HepG2 (cell line): ENCODE measurements at regions of chr17 and their contacts with region 1.

Region 1: DNA sequence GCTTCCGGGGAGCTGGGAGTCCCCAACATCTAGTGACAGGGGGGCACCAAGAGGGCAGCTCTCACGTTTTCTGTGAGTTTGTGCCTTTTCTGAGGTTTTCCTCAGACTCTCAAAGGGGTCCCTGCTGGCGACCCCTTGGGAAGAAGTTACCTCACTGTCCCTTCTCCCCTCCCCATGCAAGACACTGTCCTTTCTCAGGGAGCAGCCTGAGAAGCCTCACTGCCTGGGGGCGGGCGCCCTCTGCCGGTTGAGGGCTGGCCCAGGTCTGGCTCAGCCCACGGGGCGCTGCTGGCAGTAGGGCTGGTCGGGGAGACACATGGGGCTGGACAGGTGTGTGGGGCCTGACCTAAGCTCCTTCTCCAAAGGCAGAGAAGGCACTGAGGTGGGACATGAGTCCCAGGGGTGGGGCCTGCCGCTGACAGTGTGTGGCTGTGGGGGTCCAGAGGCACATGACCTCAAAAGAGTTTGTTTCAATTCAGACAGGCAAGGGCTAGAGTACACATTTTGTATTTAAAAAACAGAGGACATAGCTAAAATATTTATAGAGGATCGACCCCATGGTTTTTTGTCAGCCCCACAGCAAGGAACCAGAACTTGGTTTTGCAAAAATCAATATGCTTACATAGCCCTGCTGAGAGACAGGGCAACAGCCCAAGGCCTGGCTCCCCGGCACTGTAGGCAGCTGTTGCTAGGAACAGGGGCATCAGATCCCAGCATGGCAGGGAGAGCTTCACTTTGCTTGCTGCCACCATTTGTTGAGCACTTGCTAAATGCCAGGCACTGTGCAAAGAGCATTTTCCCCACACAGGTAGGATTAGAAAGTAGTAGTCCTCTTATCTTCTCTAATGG is 18.5 kb upstream of the ALDH3A1 start:
- DNase-seq: peak; percentile 22
- ATAC-seq: peak; percentile 94
- H3K4me3 ChIP-seq: no peak overlapping the region; a peak in 1 of 6 replicates
- H3K27ac ChIP-seq: no peak overlapping the region
- H3K4me1 ChIP-seq: peaks cover 29% of the 10 kb centered on the region
- H3K27me3 ChIP-seq: peaks cover 0 to 9% of the 10 kb centered on the region in 2 experiments; a peak in 2 of 5 replicates
- CTCF ChIP-seq: peak; percentile 99
- EP300 ChIP-seq: no peak
- POLR2A ChIP-seq: no peak
- RAD21 ChIP-seq: peak; percentile 93

Region 2: DNA sequence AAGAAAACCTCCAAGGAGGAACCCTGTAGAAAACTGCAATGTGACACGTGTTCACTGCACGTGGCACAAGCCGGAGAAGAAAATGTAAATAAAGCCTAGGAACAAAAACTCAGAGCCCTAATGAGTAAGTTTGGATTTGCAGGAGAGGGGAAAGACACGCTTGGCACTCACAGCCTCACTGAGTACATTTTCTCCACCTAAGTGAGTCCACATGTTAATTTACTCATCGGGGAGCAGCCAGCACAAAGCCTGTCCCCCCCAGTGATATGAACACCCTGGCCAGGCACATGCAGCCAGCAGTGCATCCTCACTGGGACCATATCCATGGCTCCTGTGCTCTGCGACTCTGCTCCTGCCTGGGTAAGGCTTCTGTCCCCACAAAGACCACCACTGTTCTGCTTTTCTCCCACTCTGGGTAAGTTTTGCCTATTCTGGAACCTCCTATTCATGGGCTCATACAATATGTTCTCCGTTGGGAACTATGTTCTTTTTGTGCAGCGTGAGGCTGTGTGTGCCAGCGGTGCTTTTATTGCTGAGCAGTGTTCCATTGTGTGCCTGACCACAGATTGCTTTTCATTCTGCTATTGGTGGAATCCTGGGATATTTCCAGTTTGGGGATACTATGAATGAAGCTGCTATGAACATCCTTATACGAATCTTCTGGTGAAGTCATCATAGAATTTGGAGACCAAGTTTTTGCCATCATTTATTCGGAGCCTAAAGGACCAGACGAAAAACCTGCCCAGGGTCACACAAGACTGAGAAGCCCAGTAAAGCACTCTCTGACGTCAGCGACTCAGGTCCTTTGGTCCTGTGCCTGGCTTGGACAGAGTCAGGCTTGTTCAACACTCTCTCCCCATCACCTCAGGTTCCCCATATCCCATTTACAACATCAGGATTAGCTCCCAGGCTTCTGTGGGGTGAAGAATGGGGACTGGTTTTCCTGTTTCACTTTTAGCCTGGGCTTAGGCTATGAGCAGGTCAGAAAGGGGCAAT is 302.3 kb before region 1 on chr17:
- CTCF ChIA-PET with region 1: interaction called, 3 read pairs
- POLR2A ChIA-PET with region 1: no interaction called
- in situ Hi-C with region 1: no loop called
- intact Hi-C with region 1: loop called (anchors 5 kb)
- DNase-seq: no peak
- ATAC-seq: no peak
- H3K4me3 ChIP-seq: no peak overlapping the region
- H3K27ac ChIP-seq: no peak overlapping the region
- H3K4me1 ChIP-seq: no peaks in the 10 kb centered on the region
- H3K27me3 ChIP-seq: peaks cover 0 to 2% of the 10 kb centered on the region in 2 experiments; a peak in 1 of 5 replicates
- CTCF ChIP-seq: no peak
- EP300 ChIP-seq: no peak
- POLR2A ChIP-seq: no peak
- RAD21 ChIP-seq: no peak

Region 3: GRCh38 chr17:19513897-19514488 is 252.7 kb before region 1 on chr17:
- CTCF ChIA-PET with region 1: interaction called, 19 read pairs
- POLR2A ChIA-PET with region 1: no interaction called
- in situ Hi-C with region 1: loop called (anchors 5 kb)
- intact Hi-C with region 1: loop called (anchors 1 kb)
- DNase-seq: peak; percentile 68
- ATAC-seq: peak; percentile 87
- H3K4me3 ChIP-seq: no peak overlapping the region
- H3K27ac ChIP-seq: no peak overlapping the region
- H3K4me1 ChIP-seq: peaks cover 58% of the 10 kb centered on the region
- H3K27me3 ChIP-seq: no peaks in the 10 kb centered on the region
- CTCF ChIP-seq: peak; percentile 92
- EP300 ChIP-seq: no peak
- POLR2A ChIP-seq: no peak
- RAD21 ChIP-seq: peak; percentile 90

Region 4: GRCh38 chr17:19672009-19672750 is 94.5 kb before region 1 on chr17:
- CTCF ChIA-PET with region 1: no interaction called
- POLR2A ChIA-PET with region 1: interaction called, 4 read pairs
- in situ Hi-C with region 1: no loop called
- intact Hi-C with region 1: loop called (anchors 1 kb)
- DNase-seq: peak; percentile 94
- ATAC-seq: peak; percentile 91
- H3K4me3 ChIP-seq: no peak overlapping the region
- H3K27ac ChIP-seq: peak overlapping the region; percentile 67
- H3K4me1 ChIP-seq: peaks cover 54% of the 10 kb centered on the region
- H3K27me3 ChIP-seq: no peaks in the 10 kb centered on the region
- CTCF ChIP-seq: peak; percentile 55
- EP300 ChIP-seq: peak in 1 of 2 experiments; percentile 93; a peak in 1 of 4 replicates
- POLR2A ChIP-seq: no peak
- RAD21 ChIP-seq: peak; percentile 59; the same call in 1 of the 2 replicates

Region 5: GRCh38 chr17:19718604-19719354 is 47.9 kb before region 1 on chr17:
- CTCF ChIA-PET with region 1: interaction called, 3 read pairs
- POLR2A ChIA-PET with region 1: interaction called, 3 read pairs
- in situ Hi-C with region 1: no loop called
- intact Hi-C with region 1: loop called (anchors 5 kb)
- DNase-seq: peak; percentile 38
- ATAC-seq: peak; percentile 60
- H3K4me3 ChIP-seq: no peak overlapping the region; a peak in 1 of 6 replicates
- H3K27ac ChIP-seq: no peak overlapping the region
- H3K4me1 ChIP-seq: peaks cover 71% of the 10 kb centered on the region
- H3K27me3 ChIP-seq: peaks cover 0 to 4% of the 10 kb centered on the region in 2 experiments; a peak in 2 of 5 replicates
- CTCF ChIP-seq: peak; percentile 84
- EP300 ChIP-seq: no peak
- POLR2A ChIP-seq: no peak
- RAD21 ChIP-seq: peak; percentile 85